GM12878 (cell line): ENCODE measurements at regions of chr3 and their contacts with region 1.

Region 1: DNA sequence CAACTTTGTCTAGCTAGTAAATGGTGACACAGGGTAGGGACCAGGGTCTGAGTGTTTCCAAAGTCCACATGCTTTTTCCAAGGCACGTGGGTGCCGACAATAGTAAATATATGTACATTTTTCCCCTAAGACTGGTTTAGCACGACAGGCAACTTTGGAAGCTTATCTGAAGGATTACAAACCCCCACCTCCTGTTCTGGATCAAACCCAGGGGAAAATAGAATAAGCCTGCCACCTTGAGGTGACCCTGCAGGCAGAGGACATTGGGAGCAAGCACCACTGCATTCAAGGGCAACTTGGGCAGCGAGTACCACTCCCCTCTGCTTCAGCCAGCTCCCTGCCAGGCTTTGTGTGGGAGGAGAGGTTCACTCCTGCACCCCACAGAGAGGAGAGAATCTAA is 44.8 kb downstream of the KBTBD12 start:
- DNase-seq: no peak
- ATAC-seq: peak; percentile 82
- H3K4me3 ChIP-seq: no peak overlapping the region
- H3K27ac ChIP-seq: no peak overlapping the region
- H3K4me1 ChIP-seq: no peaks in the 10 kb centered on the region
- H3K27me3 ChIP-seq: no peaks in the 10 kb centered on the region
- CTCF ChIP-seq: peak; percentile 44 to 74 (median 49); a peak in 4 of 6 replicates
- EP300 ChIP-seq: no peak
- POLR2A ChIP-seq: no peak
- RAD21 ChIP-seq: peak; percentile 84

Region 2: DNA sequence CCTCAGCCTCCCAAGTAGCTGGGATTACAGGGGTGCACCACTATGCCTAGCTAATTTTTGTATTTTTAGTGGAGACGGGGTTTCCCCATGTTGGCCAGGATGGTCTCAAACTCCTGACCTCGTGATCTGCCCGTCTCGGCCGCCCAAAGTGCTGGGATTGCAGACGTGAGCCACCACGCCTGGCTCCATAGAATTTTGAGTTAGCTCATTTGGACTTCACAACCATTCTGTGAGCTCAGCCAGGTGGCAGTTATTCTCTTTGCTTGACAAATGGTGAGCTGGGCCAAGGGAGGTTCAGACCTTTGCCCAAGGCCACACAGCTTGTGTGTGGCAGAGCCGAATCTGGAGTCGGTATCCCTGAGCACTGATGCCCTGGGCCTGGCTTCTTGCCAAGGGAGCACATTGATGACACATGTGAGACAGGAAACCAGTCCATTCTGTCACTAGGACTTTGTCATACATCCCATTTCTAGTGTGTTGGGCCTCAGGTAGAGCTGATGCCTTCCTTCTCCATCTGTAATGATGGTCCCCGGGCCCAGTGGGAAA is 313.3 kb before region 1 on chr3:
- CTCF ChIA-PET with region 1: interaction called, 53 read pairs
- POLR2A ChIA-PET with region 1: no interaction called
- RAD21 ChIA-PET with region 1: interaction called, 30 read pairs
- SMC1A ChIA-PET with region 1: interaction called, 16 read pairs
- in situ Hi-C with region 1: loop called (anchors 5 kb)
- intact Hi-C with region 1: no loop called
- DNase-seq: no peak
- ATAC-seq: no peak
- H3K4me3 ChIP-seq: no peak overlapping the region
- H3K27ac ChIP-seq: no peak overlapping the region
- H3K4me1 ChIP-seq: no peaks in the 10 kb centered on the region
- H3K27me3 ChIP-seq: no peaks in the 10 kb centered on the region; a peak in 1 of 4 replicates
- CTCF ChIP-seq: no peak
- EP300 ChIP-seq: no peak
- POLR2A ChIP-seq: no peak
- RAD21 ChIP-seq: no peak

Region 3: GRCh38 chr3:127697551-127698240 is 262.1 kb before region 1 on chr3:
- CTCF ChIA-PET with region 1: interaction called, 11 read pairs
- POLR2A ChIA-PET with region 1: no interaction called
- RAD21 ChIA-PET with region 1: no interaction called
- SMC1A ChIA-PET with region 1: interaction called, 4 read pairs
- in situ Hi-C with region 1: no loop called
- intact Hi-C with region 1: no loop called
- DNase-seq: peak; percentile 48
- ATAC-seq: peak; percentile 94
- H3K4me3 ChIP-seq: no peak overlapping the region
- H3K27ac ChIP-seq: no peak overlapping the region; the same call in 1 of the 2 replicates
- H3K4me1 ChIP-seq: peaks cover 14% of the 10 kb centered on the region
- H3K27me3 ChIP-seq: no peaks in the 10 kb centered on the region
- CTCF ChIP-seq: no peak
- EP300 ChIP-seq: no peak
- POLR2A ChIP-seq: peak; percentile 46
- RAD21 ChIP-seq: no peak

Region 4: GRCh38 chr3:127791211-127791946 is 168.5 kb before region 1 on chr3:
- CTCF ChIA-PET with region 1: interaction called, 46 read pairs
- POLR2A ChIA-PET with region 1: interaction called, 3 read pairs
- RAD21 ChIA-PET with region 1: interaction called, 20 read pairs
- SMC1A ChIA-PET with region 1: interaction called, 31 read pairs
- in situ Hi-C with region 1: no loop called
- intact Hi-C with region 1: no loop called
- DNase-seq: peak; percentile 41
- ATAC-seq: peak; percentile 99
- H3K4me3 ChIP-seq: no peak overlapping the region
- H3K27ac ChIP-seq: no peak overlapping the region
- H3K4me1 ChIP-seq: peaks cover 13% of the 10 kb centered on the region
- H3K27me3 ChIP-seq: no peaks in the 10 kb centered on the region
- CTCF ChIP-seq: peak; percentile 51 to 58 (median 52); a peak in 5 of 6 replicates
- EP300 ChIP-seq: no peak
- POLR2A ChIP-seq: no peak
- RAD21 ChIP-seq: peak; percentile 68

Region 5: GRCh38 chr3:127844326-127844942 is 115.4 kb before region 1 on chr3:
- CTCF ChIA-PET with region 1: interaction called, 3 read pairs
- POLR2A ChIA-PET with region 1: no interaction called
- RAD21 ChIA-PET with region 1: interaction called, 12 read pairs
- SMC1A ChIA-PET with region 1: interaction called, 6 read pairs
- in situ Hi-C with region 1: no loop called
- intact Hi-C with region 1: no loop called
- DNase-seq: peak; percentile 51
- ATAC-seq: peak; percentile 92
- H3K4me3 ChIP-seq: no peak overlapping the region
- H3K27ac ChIP-seq: no peak overlapping the region
- H3K4me1 ChIP-seq: peaks cover 31% of the 10 kb centered on the region
- H3K27me3 ChIP-seq: no peaks in the 10 kb centered on the region
- CTCF ChIP-seq: no peak
- EP300 ChIP-seq: no peak
- POLR2A ChIP-seq: no peak
- RAD21 ChIP-seq: no peak

Region 6: DNA sequence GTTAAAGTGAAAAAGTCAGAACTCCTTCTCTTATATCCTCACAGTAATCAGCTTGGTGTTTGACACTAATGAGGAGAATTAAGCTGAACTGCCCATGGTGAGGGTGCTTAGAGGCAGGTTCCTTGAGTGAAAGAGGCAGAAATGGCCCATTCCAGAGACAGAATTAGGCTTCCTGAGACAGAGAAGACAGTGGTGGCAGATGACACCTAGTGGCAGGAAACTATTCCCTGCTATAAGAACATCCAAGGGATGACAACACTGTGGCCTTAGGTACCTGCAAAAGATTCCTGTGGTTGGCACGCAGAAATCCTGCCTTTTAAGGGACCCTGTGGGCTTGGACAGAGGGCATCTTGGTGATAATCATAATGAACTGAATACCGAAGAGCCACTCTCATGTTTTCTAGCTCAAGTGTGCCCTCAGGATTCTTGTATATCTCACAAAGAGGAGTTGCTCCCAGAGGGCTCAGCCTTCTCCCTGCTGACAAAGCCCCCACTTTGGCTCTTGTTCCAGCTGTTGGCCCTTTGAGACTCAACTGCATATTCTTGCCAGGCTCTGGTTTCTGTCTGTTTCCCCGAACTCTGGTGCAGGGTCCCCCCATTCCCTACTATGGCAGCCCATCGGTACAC is 11.2 kb after region 1 on chr3:
- CTCF ChIA-PET with region 1: interaction called, 17 read pairs
- POLR2A ChIA-PET with region 1: no interaction called
- RAD21 ChIA-PET with region 1: interaction called, 12 read pairs
- SMC1A ChIA-PET with region 1: interaction called, 7 read pairs
- in situ Hi-C with region 1: no loop called
- intact Hi-C with region 1: no loop called
- DNase-seq: peak; percentile 26
- ATAC-seq: peak; percentile 98
- H3K4me3 ChIP-seq: no peak overlapping the region
- H3K27ac ChIP-seq: no peak overlapping the region
- H3K4me1 ChIP-seq: no peaks in the 10 kb centered on the region
- H3K27me3 ChIP-seq: no peaks in the 10 kb centered on the region
- CTCF ChIP-seq: peak; percentile 72 to 93 (median 75); a peak in 5 of 6 replicates
- EP300 ChIP-seq: no peak
- POLR2A ChIP-seq: no peak
- RAD21 ChIP-seq: peak; percentile 94